ENCODE measurements at regions of chr19 and their contacts with region 1.

Region 1: GRCh38 chr19:36169084-36169760 is 17.0 kb upstream of the COX7A1 start:
- DNase-seq: peak in 2 of 3 donors; percentile 66 to 71
- ATAC-seq: peak; percentile 91
- H3K4me3 ChIP-seq: no peak overlapping the region
- H3K4me1 ChIP-seq: peaks cover 18% of the 10 kb centered on the region
- CTCF ChIP-seq: no peak

Region 2: GRCh38 chr19:36132489-36132891 is 36.7 kb before region 1 on chr19:
- intact Hi-C with region 1: loop called (anchors 2 to 5 kb)
- DNase-seq: no peak
- ATAC-seq: peak; percentile 60
- H3K4me3 ChIP-seq: no peak overlapping the region
- H3K4me1 ChIP-seq: peaks cover 20% of the 10 kb centered on the region
- CTCF ChIP-seq: no peak

Measured in mucosa of descending colon (tissue), 3 donors.